Endothelial cell of umbilical vein (primary cell): ENCODE measurements at regions of chr3 and their contacts with region 1.

Region 1: DNA sequence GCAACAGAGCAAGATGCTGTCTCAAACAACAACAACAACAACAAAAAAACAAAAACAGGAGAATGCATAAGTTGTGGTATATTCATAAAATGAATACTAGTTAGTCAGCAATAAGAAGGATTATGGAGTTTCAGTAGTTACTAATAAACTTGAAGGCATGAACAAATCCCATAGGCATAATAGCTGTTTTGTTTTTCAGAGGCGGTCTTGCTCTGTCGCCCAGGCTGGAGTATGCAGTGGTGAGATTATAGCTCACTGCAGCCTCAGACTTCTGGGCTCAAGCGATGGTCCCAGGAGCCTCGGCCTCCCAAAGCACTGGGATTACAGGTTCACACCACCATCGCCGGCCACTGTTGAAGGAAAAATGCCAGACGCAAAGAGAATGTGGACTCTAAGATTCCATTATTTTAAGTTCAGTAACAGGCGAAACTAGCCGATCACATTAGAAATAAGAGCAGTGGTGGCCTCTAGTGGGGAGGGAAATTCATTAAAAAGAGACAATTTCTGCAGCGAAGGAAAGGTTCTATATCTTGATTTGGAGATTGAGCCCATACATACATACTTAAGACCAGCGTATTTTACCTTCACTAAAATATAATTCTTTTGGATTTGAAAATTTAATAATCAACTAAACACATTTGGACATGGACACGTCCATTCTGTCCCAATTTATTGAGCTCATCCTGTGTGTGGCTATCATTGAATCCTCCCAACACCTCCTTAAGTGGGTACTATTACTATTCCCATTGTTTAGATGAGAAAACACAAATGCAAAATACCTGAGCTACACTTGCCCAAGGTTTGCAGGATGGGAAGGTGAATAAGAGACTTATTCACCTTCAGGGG is 27.4 kb upstream of the HDAC11 start:
- DNase-seq: peak; percentile 61
- H3K4me3 ChIP-seq: no peak overlapping the region
- H3K27ac ChIP-seq: no peak overlapping the region
- H3K4me1 ChIP-seq: no peaks in the 10 kb centered on the region
- H3K27me3 ChIP-seq: no peaks in the 10 kb centered on the region
- CTCF ChIP-seq: peak; percentile 31 to 32
- POLR2A ChIP-seq: no peak

Region 2: DNA sequence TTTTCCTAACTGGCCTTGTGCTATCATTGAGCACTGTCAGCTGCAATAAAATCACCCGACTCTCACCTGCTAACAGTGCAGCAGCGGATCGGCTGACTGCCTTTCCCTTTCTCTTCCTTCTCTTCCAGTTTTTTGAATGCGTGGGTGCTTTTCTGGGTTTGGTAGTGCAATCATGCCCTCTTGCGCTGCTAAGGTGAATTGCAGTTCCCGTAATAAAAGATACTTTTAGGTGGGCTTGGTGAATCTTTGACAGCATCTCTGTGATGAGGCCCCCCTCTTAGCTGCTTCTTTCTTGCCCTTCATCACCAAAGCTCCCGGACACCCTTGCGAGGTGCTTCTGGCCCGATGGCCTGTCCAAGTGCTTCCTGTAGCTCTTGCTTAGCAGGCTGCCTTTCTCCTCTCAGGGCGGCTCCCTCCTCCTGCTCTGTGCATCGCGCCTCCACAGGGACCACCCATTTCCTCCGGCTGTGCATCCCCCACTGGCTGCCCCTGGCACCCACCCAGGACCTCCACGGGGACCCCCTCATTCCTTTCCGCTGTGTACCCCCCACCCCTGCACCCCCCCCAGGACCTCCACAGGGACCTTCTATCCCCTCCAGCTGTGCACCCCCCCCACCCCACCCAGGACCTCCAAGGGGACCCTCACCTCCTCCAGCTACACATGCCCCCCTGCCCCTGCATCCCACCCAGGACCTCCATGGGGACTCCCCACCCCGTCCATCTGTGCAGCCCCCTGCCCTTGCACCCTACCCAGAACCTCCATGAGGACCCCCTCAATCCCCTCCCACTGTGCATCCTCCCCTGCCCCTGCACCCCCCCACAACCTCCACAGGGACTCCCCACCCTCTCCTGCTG is 560.5 kb before region 1 on chr3:
- CTCF ChIA-PET with region 1: no interaction called
- POLR2A ChIA-PET with region 1: no interaction called
- dilution Hi-C with region 1: no loop called
- intact Hi-C with region 1: no loop called
- DNase-seq: peak; percentile 57
- H3K4me3 ChIP-seq: no peak overlapping the region
- H3K27ac ChIP-seq: no peak overlapping the region
- H3K4me1 ChIP-seq: no peaks in the 10 kb centered on the region
- H3K27me3 ChIP-seq: peaks cover 7 to 9% of the 10 kb centered on the region in 2 experiments
- CTCF ChIP-seq: peak; percentile 69 to 76
- POLR2A ChIP-seq: no peak

Region 3: DNA sequence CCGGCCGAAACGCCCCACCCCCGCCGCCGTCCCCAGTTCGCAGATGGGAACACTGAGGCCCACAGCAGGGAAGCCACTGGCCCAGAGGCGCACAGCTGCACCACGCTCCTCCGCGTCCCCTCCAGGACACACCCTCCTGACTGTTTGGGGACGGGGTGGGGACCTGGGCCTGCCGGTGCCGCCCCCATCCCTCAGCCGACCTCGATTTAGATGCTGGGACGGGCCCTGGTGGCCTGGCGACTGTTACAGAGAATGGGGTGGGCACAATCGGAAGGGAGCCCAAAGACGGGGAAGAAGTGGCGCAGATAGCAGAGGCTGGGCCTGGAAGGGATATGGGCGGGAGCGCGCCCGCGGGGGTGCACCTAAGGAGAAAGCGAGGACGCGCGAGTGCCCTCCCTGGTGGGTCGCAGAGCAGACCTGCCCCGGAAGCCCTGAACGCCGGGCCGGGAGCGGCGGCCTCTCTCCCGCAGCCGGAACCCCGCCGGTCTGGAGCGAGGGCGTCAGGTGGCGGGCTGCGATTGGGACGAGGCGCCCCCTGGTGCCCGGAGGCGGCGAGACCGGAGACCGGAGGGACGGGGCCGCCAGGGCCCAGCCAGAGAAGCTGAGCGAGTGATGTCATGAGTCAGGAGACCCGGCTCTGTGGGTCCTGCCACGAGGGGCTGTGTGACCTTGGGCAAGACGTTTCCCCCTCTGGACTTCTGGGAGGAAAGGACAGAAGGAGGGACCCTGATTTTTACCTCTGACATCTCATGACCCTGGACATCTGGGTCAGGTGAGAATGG is 457.9 kb before region 1 on chr3:
- CTCF ChIA-PET with region 1: no interaction called
- POLR2A ChIA-PET with region 1: no interaction called
- dilution Hi-C with region 1: no loop called
- intact Hi-C with region 1: loop called (anchors 10 kb)
- DNase-seq: peak; percentile 79
- H3K4me3 ChIP-seq: peak overlapping the region; percentile 30 to 49 (median 41)
- H3K27ac ChIP-seq: no peak overlapping the region
- H3K4me1 ChIP-seq: peaks cover 5% of the 10 kb centered on the region
- H3K27me3 ChIP-seq: peaks cover 8 to 22% of the 10 kb centered on the region in 2 experiments
- CTCF ChIP-seq: peak; percentile 95 to 97
- POLR2A ChIP-seq: no peak

Region 4: DNA sequence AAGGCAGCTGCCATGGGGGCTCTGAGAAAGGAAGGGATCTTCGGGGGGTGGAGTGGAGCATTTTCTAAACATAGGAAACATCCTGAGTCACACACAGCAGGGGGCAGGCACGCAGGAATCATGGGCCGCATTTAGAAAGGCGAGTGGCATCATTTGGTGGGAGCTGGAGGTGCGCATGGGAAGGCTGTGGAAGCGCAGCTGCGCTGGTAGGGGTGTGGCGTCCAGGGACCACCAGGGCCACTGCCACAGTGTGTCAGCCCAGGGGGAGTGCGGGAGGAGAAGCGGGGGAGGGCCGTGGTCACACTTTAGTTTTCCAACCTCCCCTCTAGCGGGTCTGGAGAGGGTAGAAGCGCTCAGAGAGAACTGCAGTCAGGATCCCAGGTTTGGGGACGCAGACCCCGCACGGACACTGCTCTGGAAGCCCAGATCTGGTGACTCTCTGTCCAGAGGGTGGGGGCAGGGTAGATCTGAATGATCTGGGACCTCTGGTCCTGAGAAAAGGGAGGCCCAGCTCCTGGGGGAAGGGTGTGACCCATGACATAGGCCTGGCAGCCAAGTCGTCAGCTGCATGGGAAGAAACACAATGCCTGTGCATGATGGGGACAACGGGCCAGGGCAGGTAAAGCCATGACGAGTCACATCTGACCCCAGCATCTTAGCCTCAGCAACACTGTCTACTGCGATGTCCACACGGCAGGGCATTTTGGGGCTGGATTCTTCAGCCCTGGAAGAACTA is 291.5 kb before region 1 on chr3:
- CTCF ChIA-PET with region 1: interaction called, 5 read pairs
- POLR2A ChIA-PET with region 1: no interaction called
- dilution Hi-C with region 1: no loop called
- intact Hi-C with region 1: loop called (anchors 1 kb)
- DNase-seq: no peak
- H3K4me3 ChIP-seq: no peak overlapping the region
- H3K27ac ChIP-seq: no peak overlapping the region
- H3K4me1 ChIP-seq: no peaks in the 10 kb centered on the region
- H3K27me3 ChIP-seq: no peaks in the 10 kb centered on the region
- CTCF ChIP-seq: no peak
- POLR2A ChIP-seq: no peak

Region 5: DNA sequence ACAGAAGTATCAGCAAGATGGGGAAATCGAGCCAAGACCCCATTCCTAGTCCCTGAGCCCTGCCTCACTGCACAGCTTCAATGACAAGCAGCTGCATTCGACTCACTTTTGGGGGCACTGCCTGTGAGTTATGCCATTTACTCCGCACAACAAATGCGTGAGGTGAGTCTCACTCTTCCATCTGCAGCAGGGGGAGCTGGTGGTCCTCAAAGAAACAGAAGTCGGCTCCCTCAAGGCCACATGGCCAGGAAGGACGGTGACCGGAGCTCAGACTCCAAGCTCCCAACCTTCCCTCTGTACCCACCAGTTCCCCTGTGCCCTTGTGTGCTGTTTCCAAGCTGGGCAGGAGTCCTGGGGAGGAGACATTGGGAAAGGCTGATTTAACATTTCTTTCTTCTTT is 251.8 kb before region 1 on chr3:
- CTCF ChIA-PET with region 1: interaction called, 8 read pairs
- POLR2A ChIA-PET with region 1: no interaction called
- dilution Hi-C with region 1: no loop called
- intact Hi-C with region 1: loop called (anchors 10 kb)
- DNase-seq: no peak
- H3K4me3 ChIP-seq: no peak overlapping the region
- H3K27ac ChIP-seq: no peak overlapping the region
- H3K4me1 ChIP-seq: no peaks in the 10 kb centered on the region
- H3K27me3 ChIP-seq: no peaks in the 10 kb centered on the region
- CTCF ChIP-seq: no peak
- POLR2A ChIP-seq: no peak

Region 6: DNA sequence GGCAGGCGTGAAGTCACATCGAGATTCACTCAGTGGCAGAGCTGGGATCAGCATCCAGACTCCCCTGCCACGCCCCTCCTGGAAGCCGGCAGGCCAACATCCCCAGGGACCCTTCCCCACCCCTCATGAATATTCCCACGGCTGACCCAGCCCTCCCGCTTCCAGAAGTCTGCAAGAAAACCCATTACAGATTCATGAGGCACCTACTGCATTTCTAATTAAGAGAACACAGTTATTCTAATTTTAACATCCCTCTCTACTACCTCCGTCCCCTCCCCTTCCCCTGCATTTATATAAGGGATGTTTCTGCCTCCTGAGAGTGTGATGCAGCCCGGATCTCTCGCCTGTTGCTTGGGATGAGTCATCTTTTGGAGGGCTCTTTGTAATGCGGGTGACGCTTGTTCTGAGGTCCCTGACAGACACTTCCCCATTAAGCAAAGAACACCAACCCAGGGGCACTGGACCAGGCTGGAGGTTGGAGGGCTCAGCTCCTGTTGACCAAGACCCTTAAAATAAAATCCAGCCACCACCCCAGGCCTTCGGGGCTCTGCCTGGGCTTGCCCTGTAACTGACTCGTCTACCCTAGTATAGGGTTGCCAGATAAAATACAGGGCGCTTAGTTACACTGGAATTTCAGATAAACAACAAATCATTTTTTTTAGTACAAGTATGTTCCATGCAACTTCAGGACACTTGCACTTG is 151.3 kb before region 1 on chr3:
- CTCF ChIA-PET with region 1: no interaction called
- POLR2A ChIA-PET with region 1: no interaction called
- dilution Hi-C with region 1: no loop called
- intact Hi-C with region 1: loop called (anchors 5 kb)
- DNase-seq: no peak
- H3K4me3 ChIP-seq: no peak overlapping the region
- H3K27ac ChIP-seq: no peak overlapping the region
- H3K4me1 ChIP-seq: no peaks in the 10 kb centered on the region
- H3K27me3 ChIP-seq: no peaks in the 10 kb centered on the region
- CTCF ChIP-seq: no peak
- POLR2A ChIP-seq: no peak

Region 7: DNA sequence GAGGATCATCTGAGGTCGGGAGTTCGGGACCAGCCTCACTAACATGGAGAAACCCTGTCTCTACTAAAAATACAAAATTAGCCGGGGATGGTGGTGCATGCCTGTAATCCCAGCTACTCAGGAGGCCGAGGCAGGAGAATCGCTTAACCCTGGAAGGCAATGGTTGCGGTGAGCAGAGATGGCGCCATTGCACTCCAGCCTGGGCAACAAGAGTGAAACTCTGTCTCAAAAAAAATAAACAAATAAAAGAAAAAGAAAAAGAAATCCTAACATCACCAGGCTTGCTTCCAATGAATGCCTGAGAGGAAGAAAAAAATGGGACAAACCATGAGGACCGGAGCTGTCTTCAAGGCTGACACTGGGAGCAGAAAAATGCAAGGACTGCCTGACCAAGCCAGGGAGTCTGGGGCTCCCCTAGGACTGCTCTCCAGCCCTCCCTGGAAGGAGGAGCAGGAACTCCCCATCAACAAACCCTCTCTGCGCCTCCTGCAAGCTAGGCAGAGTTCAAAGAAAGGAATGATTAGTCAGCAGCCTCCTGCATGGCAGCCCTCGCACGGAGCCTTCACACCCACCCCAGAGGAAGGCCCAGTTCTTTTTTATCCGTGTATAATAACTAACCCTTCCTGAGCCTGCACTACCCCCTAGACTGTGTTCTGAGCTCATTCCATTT is 88.0 kb before region 1 on chr3:
- CTCF ChIA-PET with region 1: no interaction called
- POLR2A ChIA-PET with region 1: no interaction called
- dilution Hi-C with region 1: no loop called
- intact Hi-C with region 1: no loop called
- DNase-seq: no peak
- H3K4me3 ChIP-seq: no peak overlapping the region
- H3K27ac ChIP-seq: no peak overlapping the region
- H3K4me1 ChIP-seq: no peaks in the 10 kb centered on the region
- H3K27me3 ChIP-seq: no peaks in the 10 kb centered on the region
- CTCF ChIP-seq: no peak
- POLR2A ChIP-seq: no peak

Region 8: DNA sequence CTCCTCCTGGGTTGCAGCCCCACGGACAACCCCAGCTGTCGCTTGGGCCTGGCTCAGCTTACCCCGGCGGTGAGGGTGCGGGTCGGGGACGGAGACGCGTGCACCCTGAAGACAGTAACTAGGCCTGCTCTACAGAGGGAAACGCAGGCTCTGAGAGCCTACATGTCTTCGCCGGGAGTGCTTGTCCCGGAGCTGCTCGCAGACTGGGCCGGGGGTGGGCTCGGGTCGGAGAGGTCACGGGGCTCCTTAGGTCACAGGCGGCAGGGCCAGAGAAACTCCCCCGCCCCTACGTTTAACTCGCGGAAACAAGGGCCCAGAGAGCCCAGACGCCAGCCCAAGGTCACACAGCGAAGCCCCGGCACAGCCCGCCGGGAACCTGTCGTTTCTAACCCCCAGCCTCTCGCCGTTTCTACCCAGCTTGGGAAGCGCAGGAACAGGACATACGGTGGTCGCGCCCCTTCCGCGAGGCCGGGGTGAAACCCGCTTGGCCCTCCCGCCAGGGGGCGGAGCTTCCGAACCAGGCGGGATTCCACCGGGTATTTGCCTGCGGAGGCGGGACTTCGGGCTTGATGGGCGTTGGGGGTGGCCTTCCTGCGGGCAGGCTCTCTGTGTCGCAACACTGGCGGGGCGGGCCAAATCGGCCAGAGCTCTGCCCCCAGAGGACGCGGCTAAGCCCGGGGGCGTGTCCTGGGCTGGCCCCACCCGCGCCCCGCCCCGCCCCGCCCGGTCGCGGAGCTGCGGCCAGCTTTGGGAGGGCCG is 27.0 kb after region 1 on chr3 and contains the start of gene HDAC11:
- CTCF ChIA-PET with region 1: interaction called, 14 read pairs
- POLR2A ChIA-PET with region 1: no interaction called
- dilution Hi-C with region 1: no loop called
- intact Hi-C with region 1: loop called (anchors 1 kb)
- DNase-seq: peak; percentile 97
- H3K4me3 ChIP-seq: peak within 1 kb of the TSS; percentile 59 to 93 (median 82)
- H3K27ac ChIP-seq: peak within 1 kb of the TSS; percentile 76
- H3K4me1 ChIP-seq: peaks cover 3% of the 10 kb centered on the region
- H3K27me3 ChIP-seq: no peaks in the 10 kb centered on the region
- CTCF ChIP-seq: peak in 1 of 2 donors; percentile 33
- POLR2A ChIP-seq: no peak
- total RNA-seq, gene HDAC11: 8.3 and 8.8 TPM in 2 replicates

Region 9: GRCh38 chr3:13623099-13623654 is 170.5 kb after region 1 on chr3:
- CTCF ChIA-PET with region 1: no interaction called
- POLR2A ChIA-PET with region 1: no interaction called
- dilution Hi-C with region 1: no loop called
- intact Hi-C with region 1: no loop called
- DNase-seq: no peak
- H3K4me3 ChIP-seq: no peak overlapping the region
- H3K27ac ChIP-seq: no peak overlapping the region
- H3K4me1 ChIP-seq: no peaks in the 10 kb centered on the region
- H3K27me3 ChIP-seq: no peaks in the 10 kb centered on the region
- CTCF ChIP-seq: no peak
- POLR2A ChIP-seq: no peak